ENCODE measurements at regions of chrX and their contacts with region 1.

Region 1: GRCh38 chrX:120560842-120561633 is at the start of gene CUL4B:
- DNase-seq: peak; percentile 81 to 95 (median 92)
- ATAC-seq: peak; percentile 89 to 90 (median 89)
- H3K4me3 ChIP-seq: peak within 1 kb of the TSS; percentile 55 to 88
- H3K4me3 Mint-ChIP-seq: peak within 1 kb of the TSS; percentile 89 to 100 (median 92)
- H3K27ac ChIP-seq: peak within 1 kb of the TSS; percentile 97
- H3K27ac Mint-ChIP-seq: peak within 1 kb of the TSS; percentile 95 to 100
- H3K4me1 ChIP-seq: peaks cover 4 to 11% of the 10 kb centered on the region in 2 experiments
- H3K4me1 Mint-ChIP-seq: peaks cover 20 to 36% (median 26%) of the 10 kb centered on the region in 3 donors
- H3K27me3 ChIP-seq: no peaks in the 10 kb centered on the region
- H3K27me3 Mint-ChIP-seq: peaks cover 0 to 4% of the 10 kb centered on the region in 2 donors
- total RNA-seq, gene CUL4B: 39.4 to 44.8 (median 43.1) TPM

Region 2: GRCh38 chrX:120439921-120440320 is 121.1 kb before region 1 on chrX:
- CTCF ChIA-PET with region 1: no interaction called
- POLR2A ChIA-PET with region 1: no interaction called
- DNase-seq: no peak
- ATAC-seq: no peak
- H3K4me3 ChIP-seq: no peak overlapping the region
- H3K4me3 Mint-ChIP-seq: no peak overlapping the region
- H3K27ac ChIP-seq: no peak overlapping the region
- H3K27ac Mint-ChIP-seq: no peak overlapping the region
- H3K4me1 ChIP-seq: no peaks in the 10 kb centered on the region
- H3K4me1 Mint-ChIP-seq: no peaks in the 10 kb centered on the region
- H3K27me3 ChIP-seq: no peaks in the 10 kb centered on the region
- H3K27me3 Mint-ChIP-seq: no peaks in the 10 kb centered on the region

Region 3: GRCh38 chrX:120485638-120486520 is 75.2 kb before region 1 on chrX:
- CTCF ChIA-PET with region 1: interaction called in 1 of 2 experiments, 10 read pairs
- POLR2A ChIA-PET with region 1: no interaction called
- DNase-seq: peak; percentile 10 to 69 (median 24)
- ATAC-seq: peak; percentile 67 to 80 (median 74)
- H3K4me3 ChIP-seq: peak overlapping the region; percentile 67 to 75
- H3K4me3 Mint-ChIP-seq: peak overlapping the region; percentile 82 to 89 (median 89)
- H3K27ac ChIP-seq: peak overlapping the region; percentile 80
- H3K27ac Mint-ChIP-seq: peak overlapping the region; percentile 91 to 95
- H3K4me1 ChIP-seq: peaks cover 0 to 24% of the 10 kb centered on the region in 2 experiments
- H3K4me1 Mint-ChIP-seq: peaks cover 18 to 31% (median 24%) of the 10 kb centered on the region in 3 donors
- H3K27me3 ChIP-seq: no peaks in the 10 kb centered on the region
- H3K27me3 Mint-ChIP-seq: peaks cover 0 to 6% of the 10 kb centered on the region in 2 donors

Region 4: DNA sequence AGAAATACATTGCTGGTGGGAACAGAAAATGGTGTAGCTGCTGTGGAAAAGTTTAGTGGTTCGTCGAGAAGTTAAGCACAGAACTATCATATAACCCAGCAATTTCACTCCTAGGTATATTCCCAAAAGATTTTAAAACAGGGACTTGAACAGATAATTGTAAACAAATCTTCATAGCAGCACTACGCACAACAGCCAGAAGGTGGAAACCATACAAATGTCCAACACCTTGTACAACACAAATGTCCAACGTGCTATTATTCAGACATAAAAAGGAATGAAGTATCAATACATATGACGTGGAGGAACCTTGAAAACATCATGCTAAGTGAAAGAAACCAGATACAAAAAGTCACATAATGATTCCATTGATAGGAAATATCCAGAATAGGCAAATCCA is 38.2 kb before region 1 on chrX:
- CTCF ChIA-PET with region 1: no interaction called
- POLR2A ChIA-PET with region 1: no interaction called
- DNase-seq: no peak
- ATAC-seq: no peak
- H3K4me3 ChIP-seq: no peak overlapping the region
- H3K4me3 Mint-ChIP-seq: no peak overlapping the region
- H3K27ac ChIP-seq: no peak overlapping the region
- H3K27ac Mint-ChIP-seq: no peak overlapping the region
- H3K4me1 ChIP-seq: no peaks in the 10 kb centered on the region
- H3K4me1 Mint-ChIP-seq: peaks cover 0 to 5% (median 3%) of the 10 kb centered on the region in 3 donors
- H3K27me3 ChIP-seq: no peaks in the 10 kb centered on the region
- H3K27me3 Mint-ChIP-seq: peaks cover 0 to 4% of the 10 kb centered on the region in 2 donors

Region 5: GRCh38 chrX:120603707-120604360 is 42.8 kb after region 1 on chrX and contains the start of gene MCTS1:
- CTCF ChIA-PET with region 1: interaction called in 1 of 2 experiments, 6 read pairs
- POLR2A ChIA-PET with region 1: interaction called, 6 to 21 read pairs
- DNase-seq: peak; percentile 50 to 88 (median 73)
- ATAC-seq: peak; percentile 90 to 96 (median 91)
- H3K4me3 ChIP-seq: peak within 1 kb of the TSS; percentile 61 to 87
- H3K4me3 Mint-ChIP-seq: peak within 1 kb of the TSS; percentile 93 to 99 (median 97)
- H3K27ac ChIP-seq: peak within 1 kb of the TSS; percentile 88
- H3K27ac Mint-ChIP-seq: peak within 1 kb of the TSS; percentile 95 to 99
- H3K4me1 ChIP-seq: peaks cover 6 to 11% of the 10 kb centered on the region in 2 experiments
- H3K4me1 Mint-ChIP-seq: peaks cover 9 to 14% (median 14%) of the 10 kb centered on the region in 3 donors
- H3K27me3 ChIP-seq: no peaks in the 10 kb centered on the region
- H3K27me3 Mint-ChIP-seq: no peaks in the 10 kb centered on the region
- total RNA-seq, gene MCTS1: 18.9 to 27.2 (median 25.3) TPM